Vagina (tissue), 2 donors: ENCODE measurements at regions of chr20 and their contacts with region 1.

Region 1: GRCh38 chr20:24992487-24993205 is at the start of gene APMAP:
- DNase-seq: peak; percentile 92 to 97
- H3K4me3 ChIP-seq: peak within 1 kb of the TSS; percentile 89 to 92
- H3K27ac ChIP-seq: peak within 1 kb of the TSS; percentile 89
- H3K4me1 ChIP-seq: peaks cover 40% of the 10 kb centered on the region
- H3K27me3 ChIP-seq: no peaks in the 10 kb centered on the region
- CTCF ChIP-seq: no peak
- POLR2A ChIP-seq: peak; percentile 62 to 97
- total RNA-seq, gene APMAP: 29.7 TPM

Region 2: DNA sequence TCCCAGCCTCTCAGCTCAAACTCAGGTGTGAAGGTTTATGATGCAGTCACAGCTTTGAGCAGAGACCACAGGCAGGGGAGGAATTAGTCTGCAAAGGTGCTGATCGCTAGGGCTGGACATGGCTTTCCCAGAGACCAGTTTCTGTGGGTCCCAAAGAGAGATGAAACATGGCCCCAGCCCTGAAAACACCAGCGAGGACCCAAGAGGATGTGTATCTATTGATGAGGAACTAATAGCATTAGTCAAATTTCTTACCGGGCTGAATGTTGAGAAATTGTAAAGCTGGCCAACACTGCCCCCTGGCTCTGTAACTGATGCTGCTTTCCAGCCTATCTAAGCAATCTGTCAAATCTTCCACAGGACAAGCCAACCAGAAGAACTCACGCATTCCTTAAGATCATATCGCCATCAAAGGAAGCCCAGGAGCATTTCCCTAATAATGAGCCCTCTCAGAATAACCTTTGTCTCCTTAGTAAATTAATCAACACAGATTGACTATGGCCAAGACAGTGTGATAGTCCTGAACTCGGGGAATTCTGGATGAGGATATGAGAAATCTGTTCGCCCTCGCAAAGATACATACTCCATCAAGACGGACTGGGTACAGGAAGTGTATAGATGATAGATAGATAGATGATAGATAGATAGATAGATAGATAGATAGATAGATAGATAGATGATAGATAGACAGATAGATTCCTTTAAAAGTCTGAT is 73.1 kb after region 1 on chr20:
- intact Hi-C with region 1: loop called (anchors 2 kb)
- DNase-seq: no peak
- H3K4me3 ChIP-seq: no peak overlapping the region
- H3K27ac ChIP-seq: no peak overlapping the region
- H3K4me1 ChIP-seq: no peaks in the 10 kb centered on the region
- H3K27me3 ChIP-seq: no peaks in the 10 kb centered on the region
- CTCF ChIP-seq: peak; percentile 75 to 92 (median 82)
- POLR2A ChIP-seq: no peak

Region 3: GRCh38 chr20:25178563-25179438 is 186.2 kb after region 1 on chr20:
- intact Hi-C with region 1: loop called (anchors 5 kb)
- DNase-seq: no peak
- H3K4me3 ChIP-seq: no peak overlapping the region
- H3K27ac ChIP-seq: no peak overlapping the region
- H3K4me1 ChIP-seq: peaks cover 7% of the 10 kb centered on the region
- H3K27me3 ChIP-seq: no peaks in the 10 kb centered on the region
- CTCF ChIP-seq: peak in 1 of 3 experiments; percentile 55
- POLR2A ChIP-seq: no peak

Region 4: GRCh38 chr20:25390538-25391528 is 398.2 kb after region 1 on chr20 and contains the start of gene ABHD12:
- intact Hi-C with region 1: loop called (anchors 10 kb)
- DNase-seq: peak in 1 of 2 donors; percentile 95
- H3K4me3 ChIP-seq: peak within 1 kb of the TSS; percentile 82 to 84
- H3K27ac ChIP-seq: peak within 1 kb of the TSS; percentile 75
- H3K4me1 ChIP-seq: peaks cover 15% of the 10 kb centered on the region
- H3K27me3 ChIP-seq: no peaks in the 10 kb centered on the region
- CTCF ChIP-seq: no peak
- POLR2A ChIP-seq: peak in 1 of 2 donors; percentile 42
- total RNA-seq, gene ABHD12: 36.6 TPM